IMR-90 (cell line): ENCODE measurements at regions of chr6 and their contacts with region 1.

Region 1: DNA sequence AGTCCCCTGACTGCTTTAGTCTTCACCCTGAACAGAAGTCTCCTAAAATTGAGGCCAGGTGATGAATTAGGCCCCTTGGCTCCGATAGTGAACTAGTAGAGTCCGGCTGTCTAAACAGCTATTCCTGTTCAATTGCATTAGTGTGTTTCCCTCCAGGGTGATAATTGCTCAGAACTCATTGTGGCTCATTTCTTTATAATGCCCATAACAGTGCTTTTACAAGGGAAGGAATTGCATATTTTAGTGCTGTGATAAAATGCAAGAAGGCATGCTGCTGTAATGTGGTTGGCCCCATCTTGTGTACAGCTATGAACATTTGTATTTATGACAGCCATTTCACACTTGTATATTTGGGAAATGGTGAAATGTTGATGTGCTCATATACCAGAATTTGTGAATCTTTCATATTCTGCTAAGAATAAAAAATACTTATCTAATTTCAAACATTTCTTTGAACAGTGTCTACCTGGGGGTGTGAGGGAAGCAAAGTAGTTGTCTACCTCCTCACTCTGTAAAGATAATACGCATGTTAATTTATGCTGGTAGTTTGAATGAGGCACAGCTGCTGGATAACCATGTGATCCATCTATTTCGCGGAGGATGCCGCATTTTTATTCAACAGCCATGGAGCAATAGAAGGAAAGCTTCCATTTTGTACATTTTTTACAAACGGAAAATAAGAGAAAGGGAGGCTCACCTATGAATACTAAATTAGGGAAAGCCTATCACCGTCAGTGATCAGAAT is 451.4 kb downstream of the NKAIN2 start:
- DNase-seq: no peak
- ATAC-seq: no peak
- H3K4me3 ChIP-seq: no peak overlapping the region
- H3K27ac ChIP-seq: no peak overlapping the region
- H3K4me1 ChIP-seq: no peaks in the 10 kb centered on the region
- H3K27me3 ChIP-seq: no peaks in the 10 kb centered on the region
- CTCF ChIP-seq: no peak
- POLR2A ChIP-seq: no peak
- RAD21 ChIP-seq: no peak

Region 2: DNA sequence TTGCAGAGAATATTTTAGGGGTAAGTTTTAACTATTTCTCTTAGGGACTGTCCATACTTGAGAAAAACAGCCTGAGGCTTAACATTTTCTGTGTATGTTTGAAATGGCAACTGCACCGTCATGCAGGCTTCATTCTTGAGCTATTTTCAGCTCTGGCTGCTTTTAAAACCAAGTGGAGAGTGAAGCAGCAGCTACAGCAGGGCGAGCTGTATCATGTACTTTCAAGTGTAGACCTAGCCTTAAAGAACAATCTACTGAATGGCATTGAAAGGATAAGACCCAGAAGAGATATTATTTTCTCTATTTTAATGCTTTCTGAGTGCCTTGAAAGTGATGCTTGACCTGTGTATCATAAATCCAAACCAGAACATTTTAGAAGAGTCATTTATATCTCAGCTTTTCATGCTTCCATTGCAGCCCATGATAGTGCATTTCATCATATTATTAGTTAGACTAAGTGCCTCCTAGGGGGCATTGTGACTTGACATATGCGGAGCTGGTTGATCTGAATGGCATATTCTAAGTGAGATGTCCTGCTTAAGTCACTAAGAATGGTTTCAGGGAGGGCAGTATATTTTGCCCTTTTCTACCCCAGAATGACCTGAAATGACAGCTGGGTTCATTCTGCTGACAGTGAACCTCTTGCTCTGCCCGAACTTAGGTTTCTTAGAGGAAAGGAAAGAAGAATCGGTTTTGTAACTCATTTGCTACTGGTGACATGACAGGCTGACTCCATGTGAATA is 366.2 kb before region 1 on chr6:
- CTCF ChIA-PET with region 1: no interaction called
- POLR2A ChIA-PET with region 1: interaction called, 11 read pairs
- dilution Hi-C with region 1: no loop called
- in situ Hi-C with region 1: no loop called
- intact Hi-C with region 1: no loop called
- DNase-seq: no peak
- ATAC-seq: no peak
- H3K4me3 ChIP-seq: no peak overlapping the region
- H3K27ac ChIP-seq: no peak overlapping the region
- H3K4me1 ChIP-seq: no peaks in the 10 kb centered on the region
- H3K27me3 ChIP-seq: no peaks in the 10 kb centered on the region
- CTCF ChIP-seq: no peak
- POLR2A ChIP-seq: no peak
- RAD21 ChIP-seq: no peak